Calu3 (cell line): ENCODE measurements at regions of chr7 and their contacts with region 1.

Region 1: GRCh38 chr7:135170274-135170997 is at the start of gene CYREN:
- DNase-seq: peak; percentile 97
- H3K4me3 Mint-ChIP-seq: peak within 1 kb of the TSS; percentile 78
- H3K27ac Mint-ChIP-seq: peak within 1 kb of the TSS; percentile 95
- H3K4me1 Mint-ChIP-seq: peaks cover 43% of the 10 kb centered on the region
- H3K27me3 Mint-ChIP-seq: no peaks in the 10 kb centered on the region
- CTCF ChIP-seq: peak; percentile 34
- total RNA-seq, gene CYREN: 84.8 and 89.0 TPM in 2 replicates

Region 2: DNA sequence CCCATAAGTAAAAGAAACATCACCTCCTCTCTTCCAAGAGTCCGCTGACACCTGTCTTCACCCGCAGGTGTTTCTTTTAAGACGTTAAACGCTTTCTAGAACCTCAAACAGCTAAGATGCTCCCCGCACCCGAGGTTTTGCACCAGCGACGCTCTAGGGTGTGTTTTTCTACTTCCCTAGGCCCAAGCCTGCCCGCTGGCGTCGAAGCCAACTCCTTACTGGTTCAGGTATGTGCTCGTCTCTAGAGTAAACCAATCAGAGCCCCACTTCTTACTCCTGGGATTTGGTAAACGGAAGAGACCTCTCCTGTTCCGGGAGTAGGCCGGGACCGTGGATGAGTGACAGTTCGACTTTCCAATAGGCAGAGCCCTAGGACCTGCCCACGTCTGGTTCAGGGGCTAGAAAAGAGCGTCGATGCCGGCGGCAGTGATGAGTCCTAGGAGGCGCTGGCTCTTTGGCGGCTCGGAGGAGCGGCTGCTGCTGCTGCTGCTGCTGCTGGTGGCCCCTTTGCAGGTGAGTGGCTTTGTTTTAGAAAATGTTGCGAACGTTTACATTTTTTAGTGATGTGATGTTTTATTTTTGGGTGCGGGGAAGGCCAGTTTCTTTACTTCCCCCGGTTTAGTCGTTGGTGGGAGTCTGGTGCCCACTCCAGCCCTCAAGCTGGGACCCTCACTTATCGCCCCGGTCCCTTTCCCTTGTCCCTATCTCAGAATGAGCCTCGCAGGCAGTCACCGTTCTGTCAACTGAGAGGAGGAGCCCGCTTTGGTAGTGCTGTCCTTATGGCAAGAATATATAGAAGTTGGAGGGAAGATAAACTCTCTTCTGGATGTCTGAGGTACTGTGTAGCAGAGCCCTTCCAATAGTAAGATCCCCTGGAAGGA is 523.8 kb before region 1 on chr7 and contains the start of gene BPGM:
- CTCF ChIA-PET with region 1: no interaction called
- intact Hi-C with region 1: loop called (anchors 10 kb)
- DNase-seq: peak; percentile 98
- H3K4me3 Mint-ChIP-seq: no peak within 1 kb of the TSS
- H3K27ac Mint-ChIP-seq: no peak within 1 kb of the TSS
- H3K4me1 Mint-ChIP-seq: peaks cover 37% of the 10 kb centered on the region
- H3K27me3 Mint-ChIP-seq: no peaks in the 10 kb centered on the region
- CTCF ChIP-seq: no peak
- total RNA-seq, gene BPGM: 23.3 and 32.5 TPM in 2 replicates

Region 3: GRCh38 chr7:134701272-134701671 is 469.2 kb before region 1 on chr7:
- CTCF ChIA-PET with region 1: no interaction called
- intact Hi-C with region 1: loop called (anchors 10 kb)
- DNase-seq: peak; percentile 29
- H3K4me3 Mint-ChIP-seq: no peak overlapping the region
- H3K27ac Mint-ChIP-seq: no peak overlapping the region
- H3K4me1 Mint-ChIP-seq: no peaks in the 10 kb centered on the region
- H3K27me3 Mint-ChIP-seq: peaks cover 15% of the 10 kb centered on the region
- CTCF ChIP-seq: peak; percentile 53

Region 4: DNA sequence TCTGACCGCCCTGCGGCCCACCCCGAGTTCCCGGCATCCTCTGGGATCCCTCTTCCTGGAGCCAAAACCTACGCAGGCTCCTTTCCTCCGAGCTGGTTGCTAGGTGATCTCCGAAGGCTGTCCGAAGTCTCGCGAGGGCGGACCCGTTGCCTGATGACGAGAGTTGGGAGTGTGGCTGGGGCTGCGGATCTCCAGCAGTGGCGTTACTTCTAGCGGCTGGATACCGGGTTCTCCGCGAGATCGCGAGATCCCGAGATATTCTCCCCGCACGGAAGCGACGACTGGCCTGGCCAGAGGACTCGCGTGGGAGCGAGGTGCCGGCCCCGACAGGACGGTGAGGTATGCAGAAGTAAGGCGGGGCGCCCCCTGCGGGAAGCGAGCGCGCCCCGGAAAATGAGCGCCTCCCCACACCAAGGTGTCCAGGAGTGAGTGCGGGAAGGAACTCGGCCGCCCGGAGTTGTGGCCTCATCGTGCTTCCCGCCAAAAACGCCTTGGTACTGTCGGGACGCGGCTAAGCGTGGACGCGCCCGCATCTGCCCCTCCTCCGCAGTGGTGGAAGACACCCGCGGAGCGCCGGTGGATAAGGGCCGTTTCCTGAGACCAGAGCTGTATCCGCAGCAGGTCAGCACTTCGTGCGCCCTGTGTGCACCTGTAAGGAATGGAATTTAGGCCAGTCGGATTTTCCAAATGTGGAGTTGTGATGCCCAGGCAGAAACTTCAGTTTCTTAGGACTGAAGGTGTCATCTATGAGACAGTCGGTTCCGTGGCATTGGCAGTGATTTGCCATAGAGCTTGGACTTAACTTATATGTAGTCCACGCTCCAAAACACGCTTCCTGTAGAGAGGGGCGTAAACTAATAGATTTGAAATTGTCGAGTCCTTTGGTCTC is 183.8 kb before region 1 on chr7 and contains the start of gene AGBL3:
- CTCF ChIA-PET with region 1: interaction called, 7 read pairs
- intact Hi-C with region 1: loop called (anchors 2 kb)
- DNase-seq: peak; percentile 95
- H3K4me3 Mint-ChIP-seq: peak within 1 kb of the TSS; percentile 100
- H3K27ac Mint-ChIP-seq: peak within 1 kb of the TSS; percentile 99
- H3K4me1 Mint-ChIP-seq: peaks cover 38% of the 10 kb centered on the region
- H3K27me3 Mint-ChIP-seq: no peaks in the 10 kb centered on the region
- CTCF ChIP-seq: peak; percentile 80
- total RNA-seq, gene AGBL3: 5.4 and 6.3 TPM in 2 replicates

Region 5: GRCh38 chr7:135253898-135254771 is 83.7 kb after region 1 on chr7:
- CTCF ChIA-PET with region 1: no interaction called
- intact Hi-C with region 1: loop called (anchors 10 kb)
- DNase-seq: peak; percentile 50
- H3K4me3 Mint-ChIP-seq: no peak overlapping the region
- H3K27ac Mint-ChIP-seq: no peak overlapping the region
- H3K4me1 Mint-ChIP-seq: peaks cover 20% of the 10 kb centered on the region
- H3K27me3 Mint-ChIP-seq: no peaks in the 10 kb centered on the region
- CTCF ChIP-seq: no peak